Naive thymus-derived CD4-positive, alpha-beta T cell (primary cell): ENCODE measurements at regions of chr11 and their contacts with region 1.

Region 1: DNA sequence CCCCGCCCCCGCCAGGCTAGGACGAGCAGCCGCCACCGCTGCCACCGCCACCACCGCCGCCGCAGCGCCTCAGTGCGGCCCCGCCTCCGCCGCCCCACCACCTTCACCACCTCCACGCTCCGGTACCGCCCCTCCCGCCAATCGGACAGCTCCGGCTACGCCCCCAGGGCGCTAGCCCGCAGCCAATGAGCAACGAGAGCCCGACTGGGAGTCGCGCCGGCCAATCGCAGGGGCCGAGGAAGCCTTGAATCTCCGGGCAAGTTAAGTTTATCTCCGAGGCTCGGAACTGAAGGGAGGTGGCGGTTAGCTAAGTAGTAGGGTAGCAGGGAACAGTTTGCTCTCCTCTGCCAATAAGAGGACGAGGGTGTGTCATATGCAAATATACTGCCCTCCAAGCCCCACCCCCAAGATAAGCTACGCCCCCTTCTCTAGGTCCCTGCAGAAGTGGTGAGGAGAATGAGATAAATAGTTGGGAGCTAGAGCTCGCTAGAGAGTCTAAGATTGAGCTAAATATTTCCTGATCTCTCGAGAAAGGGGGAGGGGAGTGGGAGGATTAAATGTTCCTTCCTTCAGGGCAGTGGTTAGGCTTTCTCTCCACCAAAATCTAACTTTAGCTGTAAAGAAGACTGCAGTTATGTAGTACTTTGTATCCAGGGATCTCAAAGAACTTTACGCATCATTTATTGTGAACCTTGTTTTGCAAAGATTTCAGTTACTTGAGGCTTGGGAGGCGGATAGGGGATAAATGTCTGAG is at the start of gene SESN3:
- DNase-seq: peak; percentile 96 to 100 (median 99)
- ATAC-seq: peak; percentile 92
- H3K4me3 ChIP-seq: peak within 1 kb of the TSS; percentile 82
- H3K4me3 Mint-ChIP-seq: peak within 1 kb of the TSS in 6 of 10 donors; percentile 93 to 98 (median 96)
- H3K27ac ChIP-seq: peak within 1 kb of the TSS; percentile 77
- H3K27ac Mint-ChIP-seq: peak within 1 kb of the TSS; percentile 35 to 97 (median 90)
- H3K4me1 ChIP-seq: peaks cover 16 to 24% of the 10 kb centered on the region in 2 donors
- H3K4me1 Mint-ChIP-seq: peaks cover 37 to 71% (median 50%) of the 10 kb centered on the region in 7 donors
- H3K27me3 ChIP-seq: no peaks in the 10 kb centered on the region
- H3K27me3 Mint-ChIP-seq: peaks cover 0 to 5% (median 0%) of the 10 kb centered on the region in 5 donors
- total RNA-seq, gene SESN3: 77.5 to 262 (median 133) TPM

Region 2: GRCh38 chr11:94493281-94494125 is 737.8 kb before region 1 on chr11 and contains the starts of genes ANKRD49 and MRE11:
- CTCF ChIA-PET with region 1: no interaction called
- POLR2A ChIA-PET with region 1: no interaction called
- intact Hi-C with region 1: loop called (anchors 1 to 2 kb)
- DNase-seq: peak; percentile 92 to 98 (median 97)
- ATAC-seq: peak; percentile 100
- H3K4me3 ChIP-seq: peak within 1 kb of the TSS; percentile 94
- H3K4me3 Mint-ChIP-seq: peak within 1 kb of the TSS; percentile 92 to 99 (median 96)
- H3K27ac ChIP-seq: peak within 1 kb of the TSS; percentile 93
- H3K27ac Mint-ChIP-seq: peak within 1 kb of the TSS; percentile 91 to 99 (median 97)
- H3K4me1 ChIP-seq: peaks cover 18 to 28% of the 10 kb centered on the region in 2 donors
- H3K4me1 Mint-ChIP-seq: peaks cover 31 to 64% (median 42%) of the 10 kb centered on the region in 7 donors
- H3K27me3 ChIP-seq: no peaks in the 10 kb centered on the region
- H3K27me3 Mint-ChIP-seq: no peaks in the 10 kb centered on the region
- total RNA-seq, gene ANKRD49: 25.6 to 64.4 (median 44.5) TPM
- total RNA-seq, gene MRE11: 19.0 to 45.5 (median 40.1) TPM

Region 3: DNA sequence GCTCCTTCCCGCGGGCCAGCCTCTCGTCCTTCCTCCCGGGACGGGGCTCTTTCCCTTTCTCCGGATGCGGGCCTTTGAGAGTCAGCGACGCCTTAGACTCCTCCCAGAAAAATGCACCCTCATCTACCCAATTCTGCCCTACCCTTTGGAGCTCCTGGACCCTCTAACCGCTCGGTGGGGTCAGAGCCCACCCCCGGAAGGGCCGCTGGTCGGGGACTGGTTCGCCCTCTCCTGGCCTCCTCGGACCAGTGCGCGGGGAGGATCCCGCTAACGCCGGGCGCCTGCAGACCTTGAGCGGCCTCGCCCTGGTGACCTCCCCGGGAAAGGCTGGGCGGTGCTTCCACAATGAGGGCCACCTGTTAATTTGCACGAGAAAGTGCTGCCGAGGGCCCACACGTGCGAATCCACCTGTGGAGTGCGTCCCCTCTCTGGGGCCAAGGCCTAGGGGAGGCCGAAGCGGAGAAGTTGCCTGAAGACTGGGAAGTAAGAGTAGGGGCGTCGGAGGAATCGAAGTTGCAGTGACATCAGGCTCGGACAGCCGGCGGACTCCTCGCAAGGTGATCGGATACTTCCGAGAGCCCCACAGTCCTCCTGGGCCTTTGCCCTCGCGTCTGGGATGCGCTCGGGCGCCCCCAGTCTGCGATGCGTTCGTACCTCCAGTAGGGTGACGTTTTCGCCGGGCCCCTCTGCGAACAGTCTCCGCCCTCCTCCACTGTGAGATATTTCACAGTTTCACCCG is 80.2 kb before region 1 on chr11:
- CTCF ChIA-PET with region 1: interaction called, 14 read pairs
- POLR2A ChIA-PET with region 1: interaction called, 73 read pairs
- intact Hi-C with region 1: loop called (anchors 1 kb)
- DNase-seq: peak; percentile 74 to 93 (median 90)
- ATAC-seq: peak; percentile 97
- H3K4me3 ChIP-seq: peak overlapping the region; percentile 91
- H3K4me3 Mint-ChIP-seq: peak overlapping the region; percentile 81 to 92 (median 88)
- H3K27ac ChIP-seq: peak overlapping the region; percentile 75
- H3K27ac Mint-ChIP-seq: peak overlapping the region; percentile 92 to 99 (median 96)
- H3K4me1 ChIP-seq: peaks cover 19 to 22% of the 10 kb centered on the region in 2 donors
- H3K4me1 Mint-ChIP-seq: peaks cover 22 to 53% (median 32%) of the 10 kb centered on the region in 7 donors
- H3K27me3 ChIP-seq: no peaks in the 10 kb centered on the region
- H3K27me3 Mint-ChIP-seq: peaks cover 0 to 5% (median 3%) of the 10 kb centered on the region in 5 donors

Region 4: GRCh38 chr11:95241681-95242081 is 10.4 kb after region 1 on chr11:
- CTCF ChIA-PET with region 1: no interaction called
- POLR2A ChIA-PET with region 1: interaction called, 15 read pairs
- intact Hi-C with region 1: no loop called
- DNase-seq: no peak
- ATAC-seq: peak; percentile 29
- H3K4me3 ChIP-seq: no peak overlapping the region
- H3K4me3 Mint-ChIP-seq: no peak overlapping the region
- H3K27ac ChIP-seq: no peak overlapping the region
- H3K27ac Mint-ChIP-seq: no peak overlapping the region
- H3K4me1 ChIP-seq: no peaks in the 10 kb centered on the region
- H3K4me1 Mint-ChIP-seq: peaks cover 0 to 12% (median 5%) of the 10 kb centered on the region in 7 donors
- H3K27me3 ChIP-seq: no peaks in the 10 kb centered on the region
- H3K27me3 Mint-ChIP-seq: no peaks in the 10 kb centered on the region

Region 5: DNA sequence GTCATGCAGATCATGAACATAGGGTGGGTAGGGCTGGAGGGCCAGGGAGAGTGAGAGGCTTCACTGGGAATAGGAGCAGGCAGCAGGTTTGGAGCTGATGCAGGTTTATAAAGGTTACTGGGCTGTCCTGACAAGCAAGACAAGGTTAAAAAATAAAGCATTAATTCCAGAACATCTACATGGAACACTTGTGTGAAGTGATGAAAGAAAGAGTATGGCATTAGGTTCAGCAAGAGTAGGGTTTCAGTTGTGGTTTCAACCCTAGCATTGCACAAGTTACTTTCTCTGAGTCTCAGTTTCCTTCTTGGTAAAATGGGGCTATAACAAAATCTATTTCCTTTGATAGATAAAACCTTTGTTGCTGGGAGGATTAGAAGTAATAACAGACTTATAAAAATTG is 114.3 kb after region 1 on chr11:
- CTCF ChIA-PET with region 1: interaction called, 4 read pairs
- POLR2A ChIA-PET with region 1: interaction called, 11 read pairs
- intact Hi-C with region 1: no loop called
- DNase-seq: no peak
- ATAC-seq: no peak
- H3K4me3 ChIP-seq: no peak overlapping the region
- H3K4me3 Mint-ChIP-seq: peak overlapping the region in 1 of 10 donors; percentile 26
- H3K27ac ChIP-seq: no peak overlapping the region
- H3K27ac Mint-ChIP-seq: peak overlapping the region in 2 of 9 donors; percentile 45 to 54
- H3K4me1 ChIP-seq: no peaks in the 10 kb centered on the region
- H3K4me1 Mint-ChIP-seq: peaks cover 4 to 28% (median 8%) of the 10 kb centered on the region in 7 donors
- H3K27me3 ChIP-seq: no peaks in the 10 kb centered on the region
- H3K27me3 Mint-ChIP-seq: peaks cover 0 to 5% (median 0%) of the 10 kb centered on the region in 5 donors

Region 6: DNA sequence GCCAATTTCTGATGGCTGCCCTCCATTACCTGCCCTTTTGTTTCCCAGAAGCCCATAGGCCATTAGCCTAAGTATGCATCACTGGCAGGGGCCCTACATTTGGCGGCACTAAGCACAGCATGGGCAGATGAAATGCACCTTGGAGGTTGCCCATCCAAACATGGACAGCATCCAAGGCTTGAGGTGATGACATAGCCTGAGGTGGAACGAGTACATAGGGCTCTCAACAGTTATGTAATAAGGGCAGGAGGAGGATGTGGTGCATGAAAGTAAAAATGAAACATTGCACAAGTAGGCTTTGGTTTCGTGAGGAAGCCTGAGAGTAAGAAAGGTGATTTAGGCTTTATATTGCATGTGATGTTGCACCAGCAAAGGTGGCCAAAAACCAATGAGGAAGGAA is 410.2 kb after region 1 on chr11:
- CTCF ChIA-PET with region 1: no interaction called
- POLR2A ChIA-PET with region 1: interaction called, 4 read pairs
- intact Hi-C with region 1: loop called in 1 of 2 experiments (anchors 1 kb)
- DNase-seq: peak in 8 of 9 donors; percentile 31 to 73 (median 58)
- ATAC-seq: peak; percentile 85
- H3K4me3 ChIP-seq: no peak overlapping the region
- H3K4me3 Mint-ChIP-seq: peak overlapping the region in 9 of 10 donors; percentile 30 to 76 (median 71)
- H3K27ac ChIP-seq: peak overlapping the region; percentile 54
- H3K27ac Mint-ChIP-seq: peak overlapping the region; percentile 83 to 97 (median 92)
- H3K4me1 ChIP-seq: peaks cover 0 to 21% of the 10 kb centered on the region in 2 donors
- H3K4me1 Mint-ChIP-seq: peaks cover 12 to 29% (median 21%) of the 10 kb centered on the region in 7 donors
- H3K27me3 ChIP-seq: no peaks in the 10 kb centered on the region
- H3K27me3 Mint-ChIP-seq: no peaks in the 10 kb centered on the region

Region 7: GRCh38 chr11:95764267-95764898 is 533.1 kb after region 1 on chr11:
- CTCF ChIA-PET with region 1: interaction called, 3 read pairs
- POLR2A ChIA-PET with region 1: interaction called, 5 read pairs
- intact Hi-C with region 1: loop called in 1 of 2 experiments (anchors 1 kb)
- DNase-seq: peak in 7 of 9 donors; percentile 43 to 73 (median 68)
- ATAC-seq: peak; percentile 95
- H3K4me3 ChIP-seq: no peak overlapping the region
- H3K4me3 Mint-ChIP-seq: no peak overlapping the region
- H3K27ac ChIP-seq: no peak overlapping the region
- H3K27ac Mint-ChIP-seq: no peak overlapping the region
- H3K4me1 ChIP-seq: no peaks in the 10 kb centered on the region
- H3K4me1 Mint-ChIP-seq: peaks cover 0 to 9% (median 0%) of the 10 kb centered on the region in 7 donors
- H3K27me3 ChIP-seq: no peaks in the 10 kb centered on the region
- H3K27me3 Mint-ChIP-seq: peaks cover 0 to 19% (median 0%) of the 10 kb centered on the region in 5 donors

Region 8: DNA sequence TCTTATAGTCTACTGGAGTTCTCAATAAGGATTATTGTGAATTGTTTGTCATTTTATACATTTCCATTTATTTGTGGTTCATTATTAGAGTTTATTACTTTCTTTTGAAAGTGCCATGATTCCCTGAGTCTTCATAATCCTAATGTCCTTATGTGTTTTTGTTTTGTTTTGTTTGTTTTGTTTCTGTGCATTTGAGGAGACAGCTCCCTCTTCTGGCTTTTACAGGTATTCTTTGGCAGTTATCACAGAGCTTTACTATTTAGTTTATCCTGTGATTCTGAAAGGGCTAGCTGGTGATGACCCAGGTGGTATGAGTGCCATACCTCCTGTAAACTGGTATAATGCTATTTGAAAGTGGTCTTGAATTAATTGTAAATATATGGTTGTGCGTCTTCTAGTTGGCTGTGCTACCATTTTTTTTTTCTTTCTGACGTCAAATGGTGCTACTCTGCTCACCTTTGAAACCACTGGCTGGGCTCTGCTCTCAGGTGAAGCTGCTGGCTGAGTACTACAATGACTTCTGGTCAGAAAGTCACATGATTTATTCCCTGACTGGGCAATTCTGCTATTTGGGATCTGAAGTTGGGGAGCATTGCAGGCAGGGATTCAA is 1909.7 kb after region 1 on chr11:
- CTCF ChIA-PET with region 1: no interaction called
- POLR2A ChIA-PET with region 1: no interaction called
- intact Hi-C with region 1: no loop called
- DNase-seq: no peak
- ATAC-seq: no peak
- H3K4me3 ChIP-seq: no peak overlapping the region
- H3K4me3 Mint-ChIP-seq: no peak overlapping the region
- H3K27ac ChIP-seq: no peak overlapping the region
- H3K27ac Mint-ChIP-seq: no peak overlapping the region
- H3K4me1 ChIP-seq: no peaks in the 10 kb centered on the region
- H3K4me1 Mint-ChIP-seq: no peaks in the 10 kb centered on the region
- H3K27me3 ChIP-seq: no peaks in the 10 kb centered on the region
- H3K27me3 Mint-ChIP-seq: no peaks in the 10 kb centered on the region